CD4-positive, alpha-beta memory T cell (primary cell): ENCODE measurements at regions of chr5 and their contacts with region 1.

Region 1: GRCh38 chr5:134070725-134071613 is 43.5 kb upstream of the TCF7 start:
- DNase-seq: peak in 2 of 5 donors; percentile 32 to 59
- H3K4me3 ChIP-seq: peak overlapping the region; percentile 39 to 53
- H3K4me3 Mint-ChIP-seq: peak overlapping the region; percentile 84 to 92 (median 88)
- H3K27ac ChIP-seq: peak overlapping the region; percentile 48
- H3K27ac Mint-ChIP-seq: peak overlapping the region; percentile 79 to 93 (median 87)
- H3K4me1 ChIP-seq: peaks cover 60% of the 10 kb centered on the region
- H3K4me1 Mint-ChIP-seq: peaks cover 42 to 70% (median 56%) of the 10 kb centered on the region in 4 donors
- H3K27me3 ChIP-seq: no peaks in the 10 kb centered on the region
- H3K27me3 Mint-ChIP-seq: no peaks in the 10 kb centered on the region

Region 2: GRCh38 chr5:134086943-134087305 is 16.0 kb after region 1 on chr5:
- CTCF ChIA-PET with region 1: interaction called, 10 read pairs
- POLR2A ChIA-PET with region 1: interaction called, 58 read pairs
- intact Hi-C with region 1: loop called (anchors 1 kb)
- DNase-seq: peak; percentile 82 to 92 (median 89)
- H3K4me3 ChIP-seq: peak overlapping the region in 1 of 2 donors; percentile 12
- H3K4me3 Mint-ChIP-seq: peak overlapping the region; percentile 68 to 88 (median 76)
- H3K27ac ChIP-seq: peak overlapping the region; percentile 52
- H3K27ac Mint-ChIP-seq: peak overlapping the region; percentile 94 to 99 (median 97)
- H3K4me1 ChIP-seq: peaks cover 98% of the 10 kb centered on the region
- H3K4me1 Mint-ChIP-seq: peaks cover 61 to 94% (median 78%) of the 10 kb centered on the region in 4 donors
- H3K27me3 ChIP-seq: no peaks in the 10 kb centered on the region
- H3K27me3 Mint-ChIP-seq: no peaks in the 10 kb centered on the region

Region 3: GRCh38 chr5:134101686-134102439 is 30.9 kb after region 1 on chr5:
- CTCF ChIA-PET with region 1: interaction called, 51 read pairs
- POLR2A ChIA-PET with region 1: interaction called, 4 read pairs
- intact Hi-C with region 1: loop called (anchors 2 kb)
- DNase-seq: peak; percentile 62 to 77 (median 73)
- H3K4me3 ChIP-seq: no peak overlapping the region
- H3K4me3 Mint-ChIP-seq: peak overlapping the region in 6 of 8 donors; percentile 10 to 62 (median 36)
- H3K27ac ChIP-seq: peak overlapping the region; percentile 85
- H3K27ac Mint-ChIP-seq: peak overlapping the region; percentile 59 to 96 (median 88)
- H3K4me1 ChIP-seq: peaks cover 95% of the 10 kb centered on the region
- H3K4me1 Mint-ChIP-seq: peaks cover 62 to 98% (median 82%) of the 10 kb centered on the region in 4 donors
- H3K27me3 ChIP-seq: no peaks in the 10 kb centered on the region
- H3K27me3 Mint-ChIP-seq: no peaks in the 10 kb centered on the region

Region 4: DNA sequence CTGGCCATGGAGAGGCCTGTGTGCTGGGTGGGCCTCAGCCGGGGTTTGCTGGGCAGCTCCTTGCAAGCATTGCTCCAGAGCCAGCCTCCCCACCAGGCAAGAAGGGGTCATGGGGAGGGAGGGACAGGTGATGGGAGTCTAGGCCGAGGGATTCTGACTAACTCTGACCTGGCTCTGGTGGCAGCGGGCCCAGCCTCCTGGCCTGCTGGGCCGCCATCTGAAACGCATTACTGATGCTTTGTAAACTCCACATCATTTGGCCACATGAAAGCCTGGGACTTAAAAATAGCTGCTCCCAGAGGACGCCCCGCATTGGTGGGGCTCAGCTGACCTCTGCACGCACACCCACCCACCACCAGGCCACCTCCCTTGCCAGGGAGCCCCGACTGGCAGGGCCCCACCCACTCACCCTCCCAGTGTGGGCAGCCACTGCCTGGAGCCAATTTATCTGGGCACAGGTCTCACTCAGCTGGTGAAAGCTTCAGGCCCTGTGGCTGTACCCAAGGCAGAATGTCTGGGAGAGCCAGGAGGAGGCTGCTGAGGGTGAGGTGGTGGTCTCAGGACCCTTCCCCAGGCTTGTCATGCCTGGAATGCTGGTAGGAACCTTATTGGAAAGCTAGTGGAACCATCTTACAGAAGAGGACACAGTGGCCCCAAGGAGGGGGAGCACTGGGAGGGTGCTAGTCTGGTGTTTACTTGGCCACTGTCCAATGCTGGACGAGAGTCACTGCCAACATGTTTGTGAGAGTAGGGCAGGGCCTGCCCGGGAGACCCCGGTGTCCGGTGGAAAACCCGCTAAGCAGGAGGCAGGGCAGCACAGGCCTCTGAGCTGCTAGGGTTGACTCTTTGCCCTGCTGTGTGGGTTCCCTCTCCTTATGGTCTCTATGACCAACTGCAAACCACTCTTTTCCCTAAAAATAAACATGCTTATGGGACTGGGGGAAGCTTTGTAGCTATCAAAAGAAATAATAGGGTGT is 54.4 kb after region 1 on chr5:
- CTCF ChIA-PET with region 1: interaction called, 5 read pairs
- POLR2A ChIA-PET with region 1: interaction called, 48 read pairs
- intact Hi-C with region 1: no loop called
- DNase-seq: no peak
- H3K4me3 ChIP-seq: peak overlapping the region; percentile 36 to 63
- H3K4me3 Mint-ChIP-seq: peak overlapping the region; percentile 86 to 99 (median 96)
- H3K27ac ChIP-seq: peak overlapping the region; percentile 97
- H3K27ac Mint-ChIP-seq: peak overlapping the region; percentile 95 to 99 (median 98)
- H3K4me1 ChIP-seq: peaks cover 100% of the 10 kb centered on the region
- H3K4me1 Mint-ChIP-seq: peaks cover 44 to 99% (median 77%) of the 10 kb centered on the region in 4 donors
- H3K27me3 ChIP-seq: no peaks in the 10 kb centered on the region
- H3K27me3 Mint-ChIP-seq: no peaks in the 10 kb centered on the region

Region 5: GRCh38 chr5:134140530-134141201 is 69.7 kb after region 1 on chr5:
- CTCF ChIA-PET with region 1: interaction called, 28 read pairs
- POLR2A ChIA-PET with region 1: interaction called, 41 read pairs
- intact Hi-C with region 1: loop called (anchors 1 kb)
- DNase-seq: peak; percentile 52 to 70 (median 57)
- H3K4me3 ChIP-seq: no peak overlapping the region
- H3K4me3 Mint-ChIP-seq: peak overlapping the region in 2 of 8 donors; percentile 20 to 24
- H3K27ac ChIP-seq: peak overlapping the region; percentile 97
- H3K27ac Mint-ChIP-seq: peak overlapping the region; percentile 64 to 98 (median 86)
- H3K4me1 ChIP-seq: peaks cover 59% of the 10 kb centered on the region
- H3K4me1 Mint-ChIP-seq: peaks cover 24 to 84% (median 59%) of the 10 kb centered on the region in 4 donors
- H3K27me3 ChIP-seq: no peaks in the 10 kb centered on the region
- H3K27me3 Mint-ChIP-seq: no peaks in the 10 kb centered on the region

Region 6: DNA sequence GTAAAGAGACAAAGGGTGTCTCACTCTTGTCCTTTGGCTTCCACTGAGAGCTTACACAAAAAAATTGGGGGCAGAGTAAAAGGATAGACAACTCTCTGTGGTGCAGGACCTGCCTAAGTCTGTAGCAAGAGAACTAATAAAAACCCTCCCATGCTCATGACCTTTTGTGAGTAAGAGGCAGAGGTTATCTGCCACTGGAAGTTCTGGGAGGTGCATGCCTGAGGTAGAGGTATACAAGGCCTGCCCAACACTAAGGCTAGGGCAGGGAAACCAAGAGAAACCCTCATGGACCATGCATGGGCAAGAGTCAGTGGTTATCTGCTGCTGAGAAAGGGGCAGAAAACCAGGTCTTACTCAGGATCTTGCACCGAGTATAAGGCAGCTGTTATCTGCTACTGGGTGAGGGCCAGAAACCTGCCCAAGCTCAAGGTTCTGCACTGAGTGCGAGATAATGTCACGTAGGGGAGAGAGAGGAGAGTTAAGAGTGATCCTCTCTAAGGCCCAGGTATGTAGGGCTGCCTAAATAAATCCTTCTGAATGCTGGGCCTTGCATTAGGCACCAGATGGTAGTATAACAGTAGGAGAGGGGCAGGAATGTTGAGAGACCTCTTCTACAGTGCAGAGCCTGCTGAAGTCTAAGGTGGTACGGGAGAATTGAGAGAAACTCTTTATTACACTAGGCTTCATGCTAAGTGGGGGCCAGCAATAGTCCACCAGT is 1184.7 kb after region 1 on chr5:
- CTCF ChIA-PET with region 1: no interaction called
- POLR2A ChIA-PET with region 1: no interaction called
- intact Hi-C with region 1: no loop called
- DNase-seq: no peak
- H3K4me3 ChIP-seq: no peak overlapping the region
- H3K4me3 Mint-ChIP-seq: no peak overlapping the region
- H3K27ac ChIP-seq: no peak overlapping the region
- H3K27ac Mint-ChIP-seq: no peak overlapping the region
- H3K4me1 ChIP-seq: no peaks in the 10 kb centered on the region
- H3K4me1 Mint-ChIP-seq: no peaks in the 10 kb centered on the region
- H3K27me3 ChIP-seq: no peaks in the 10 kb centered on the region
- H3K27me3 Mint-ChIP-seq: peaks cover 4 to 16% of the 10 kb centered on the region in 2 donors